GM10248 (cell line): ENCODE measurements at regions of chr1 and their contacts with region 1.

Region 1: GRCh38 chr1:169711469-169712281 is at the start of gene SELL:
- DNase-seq: peak; percentile 57
- CTCF ChIP-seq: peak; percentile 90

Region 2: GRCh38 chr1:169529068-169529696 is 182.5 kb before region 1 on chr1:
- CTCF ChIA-PET with region 1: no interaction called
- POLR2A ChIA-PET with region 1: no interaction called
- DNase-seq: no peak
- CTCF ChIP-seq: no peak

Region 3: GRCh38 chr1:169546087-169546995 is 165.3 kb before region 1 on chr1:
- CTCF ChIA-PET with region 1: interaction called, 20 read pairs
- POLR2A ChIA-PET with region 1: no interaction called
- DNase-seq: peak; percentile 25
- CTCF ChIP-seq: peak; percentile 74

Region 4: DNA sequence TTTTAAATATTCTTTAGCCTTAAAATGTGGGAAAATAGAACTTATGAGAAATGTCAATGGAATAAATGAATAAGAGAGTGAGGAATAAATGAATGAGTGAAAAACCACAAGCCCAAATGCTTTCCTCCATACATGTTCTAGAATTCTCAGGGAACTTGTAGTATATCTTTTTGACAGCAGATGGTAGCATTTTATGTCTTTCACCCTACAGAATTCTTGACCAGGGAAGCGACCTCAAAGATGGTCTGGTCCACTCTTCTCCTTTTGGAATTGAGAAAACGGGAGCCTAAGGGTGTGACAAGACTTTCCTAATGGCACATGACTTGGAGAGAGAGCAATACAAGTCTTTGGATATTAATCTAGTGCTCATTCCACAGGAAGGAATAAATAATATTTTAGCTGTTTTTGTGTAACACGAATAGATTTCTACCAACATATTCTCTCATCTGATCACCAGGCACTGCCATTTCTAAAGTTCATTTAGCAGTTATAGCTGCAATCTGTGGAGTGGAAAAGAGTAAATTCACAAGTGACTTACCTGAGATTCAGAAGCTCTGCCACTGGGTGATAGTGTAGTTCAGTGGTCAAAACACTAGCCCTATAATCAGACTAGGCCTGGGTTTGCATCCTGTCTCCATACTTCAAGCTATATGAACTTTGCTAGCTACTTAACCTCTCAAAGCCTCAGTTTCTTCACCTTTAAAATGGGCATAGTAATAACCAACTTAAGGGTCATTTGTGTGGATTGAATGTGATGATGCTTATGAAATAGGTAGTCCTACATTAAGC is 110.4 kb before region 1 on chr1:
- CTCF ChIA-PET with region 1: interaction called, 71 read pairs
- POLR2A ChIA-PET with region 1: no interaction called
- DNase-seq: peak; percentile 28
- CTCF ChIP-seq: peak; percentile 54

Region 5: DNA sequence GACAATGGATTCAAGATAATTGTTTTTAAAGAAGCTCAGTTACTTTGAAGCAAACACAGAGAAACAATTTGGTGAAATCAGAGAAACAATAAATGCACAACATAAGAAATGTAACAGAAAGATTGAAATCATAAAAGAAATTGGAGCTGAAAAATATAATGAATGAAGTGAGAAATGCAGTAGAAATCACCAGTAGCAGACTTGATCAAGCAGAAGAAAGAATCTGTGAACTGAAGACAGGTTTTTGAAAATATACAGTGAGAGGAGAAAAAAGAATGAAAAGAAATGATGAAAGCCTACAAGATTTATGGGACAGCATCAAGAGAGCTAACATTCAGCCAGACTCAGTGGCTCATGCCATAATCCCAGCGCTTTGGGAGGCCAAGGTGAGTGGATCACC is 77.5 kb before region 1 on chr1:
- CTCF ChIA-PET with region 1: interaction called, 11 read pairs
- POLR2A ChIA-PET with region 1: no interaction called
- DNase-seq: no peak
- CTCF ChIP-seq: no peak

Region 6: GRCh38 chr1:169694304-169695075 is 17.2 kb before region 1 on chr1:
- CTCF ChIA-PET with region 1: interaction called, 15 read pairs
- POLR2A ChIA-PET with region 1: interaction called, 4 read pairs
- DNase-seq: no peak
- CTCF ChIP-seq: peak; percentile 18

Region 7: DNA sequence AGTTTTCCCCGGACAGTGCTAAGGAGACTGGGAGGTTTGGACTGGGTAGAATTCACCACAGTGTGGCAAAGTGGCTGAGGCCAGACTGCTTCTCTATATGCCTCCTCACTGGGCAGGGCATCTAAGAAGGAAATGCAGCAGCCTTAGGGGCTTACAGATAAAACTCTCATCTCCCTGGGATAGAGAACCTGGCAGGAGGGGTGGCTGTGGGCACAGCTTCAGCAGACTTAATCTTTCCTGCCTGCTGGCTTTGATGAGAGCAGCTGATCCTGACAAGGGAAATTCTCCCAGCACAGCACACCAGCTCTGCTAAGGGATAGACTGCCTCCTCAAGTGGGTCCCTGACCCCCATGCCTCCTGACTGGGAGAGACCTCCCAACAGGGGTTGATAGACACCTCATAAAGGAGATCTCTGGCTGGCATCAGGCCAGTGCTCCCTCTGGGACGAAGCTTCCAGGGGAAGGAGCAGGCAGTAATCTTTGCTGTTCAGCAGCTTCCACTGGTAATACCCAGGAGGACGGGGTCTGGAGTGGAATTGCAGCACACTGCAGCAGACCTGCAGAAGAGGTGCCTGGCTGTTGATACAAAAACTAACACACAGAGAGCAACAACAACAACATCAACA is 337.6 kb after region 1 on chr1:
- CTCF ChIA-PET with region 1: no interaction called
- POLR2A ChIA-PET with region 1: no interaction called
- DNase-seq: no peak
- CTCF ChIP-seq: no peak